Activated T-helper 1 cell treated with anti-CD3 and anti-CD28 coated beads, Interleukin-12 subunit alpha, Interleukin-12 subunit beta, Interleukin-2, Interleukin-4 antibody, amounts not matched to agents 30 ng/mL and 10 ng/mL and 1 ng/mL, durations not matched to agents 14 hours and 24 hours and 36 hours (primary cell): ENCODE measurements at regions of chr9 and their contacts with region 1.

Region 1: DNA sequence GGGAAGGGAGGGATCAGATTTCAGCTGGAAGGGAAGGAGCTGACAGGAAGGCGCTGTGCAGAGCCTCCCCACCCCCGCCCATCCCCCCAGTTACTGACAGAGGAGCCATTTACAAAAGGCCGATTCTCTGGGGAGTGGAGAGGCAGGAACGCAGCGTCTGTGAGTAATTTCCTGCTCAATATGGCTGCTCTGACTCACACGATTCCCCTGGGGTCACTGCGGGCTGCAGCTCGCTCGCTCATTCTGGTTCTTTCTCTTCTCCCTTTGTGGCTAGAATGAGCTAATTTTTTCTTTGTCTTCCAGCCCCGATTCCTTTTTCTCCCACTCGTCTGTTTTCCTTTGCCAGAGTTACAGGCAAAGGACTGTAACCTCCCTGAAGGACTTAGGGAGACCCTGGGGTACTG is 28.8 kb downstream of the PTPA start:
- DNase-seq: peak; percentile 78
- H3K4me3 Mint-ChIP-seq: peak overlapping the region; percentile 82
- H3K27ac Mint-ChIP-seq: peak overlapping the region; percentile 92
- H3K4me1 Mint-ChIP-seq: peaks cover 32% of the 10 kb centered on the region
- H3K27me3 Mint-ChIP-seq: no peaks in the 10 kb centered on the region

Region 2: DNA sequence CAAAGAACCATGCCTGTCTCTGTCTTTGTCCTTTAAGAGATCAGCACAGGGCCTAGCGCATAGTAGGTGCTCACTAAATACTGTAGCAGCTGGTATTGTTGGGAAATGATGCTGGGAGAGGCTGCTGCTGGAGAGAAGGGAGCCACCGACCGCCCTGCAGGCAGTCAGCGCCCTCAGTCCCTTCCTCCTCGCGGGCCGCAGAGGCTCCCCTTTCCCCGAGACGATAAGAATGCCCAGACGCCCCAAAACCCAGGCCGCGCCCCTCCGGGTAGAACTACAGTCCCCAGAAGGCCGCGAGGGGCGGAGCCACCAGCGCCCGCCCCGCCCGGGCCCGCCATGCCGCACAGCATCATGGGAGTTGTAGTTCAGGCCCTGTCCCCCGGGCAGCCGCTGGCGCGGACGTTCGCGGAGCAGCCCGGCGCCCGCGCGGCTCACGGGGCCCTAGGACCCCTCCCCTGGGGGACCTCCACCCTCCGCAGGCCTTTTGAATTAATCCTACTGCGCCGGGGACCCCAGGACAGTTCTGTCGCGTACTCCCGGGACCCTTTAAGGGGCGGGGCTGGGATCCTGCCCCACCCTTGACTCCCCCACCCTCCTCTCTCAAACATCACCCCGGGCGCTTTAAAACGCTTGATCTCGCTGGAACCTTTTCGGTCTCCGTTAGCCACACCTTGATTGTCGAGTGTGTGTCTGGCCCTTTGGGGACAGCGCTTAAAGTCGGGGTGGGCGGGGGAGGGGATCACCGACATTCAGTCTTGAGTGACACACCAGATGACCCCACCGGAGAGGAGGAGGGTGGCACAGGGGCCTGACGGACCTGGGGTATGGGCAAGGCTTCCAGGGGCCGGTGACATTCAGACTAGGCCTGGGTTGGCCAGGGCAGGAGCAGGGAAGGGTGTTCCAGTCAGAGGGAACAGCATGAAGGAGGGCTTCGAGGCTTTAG is 62.9 kb after region 1 on chr9:
- intact Hi-C with region 1: loop called (anchors 1 kb)
- DNase-seq: peak; percentile 90
- H3K4me3 Mint-ChIP-seq: peak overlapping the region; percentile 66
- H3K27ac Mint-ChIP-seq: peak overlapping the region; percentile 73
- H3K4me1 Mint-ChIP-seq: peaks cover 6% of the 10 kb centered on the region
- H3K27me3 Mint-ChIP-seq: peaks cover 8% of the 10 kb centered on the region

Region 3: GRCh38 chr9:129460323-129461261 is 320.6 kb after region 1 on chr9:
- intact Hi-C with region 1: loop called (anchors 2 kb)
- DNase-seq: peak; percentile 83
- H3K4me3 Mint-ChIP-seq: peak overlapping the region; percentile 74
- H3K27ac Mint-ChIP-seq: peak overlapping the region; percentile 91
- H3K4me1 Mint-ChIP-seq: peaks cover 39% of the 10 kb centered on the region
- H3K27me3 Mint-ChIP-seq: peaks cover 1% of the 10 kb centered on the region

Region 4: DNA sequence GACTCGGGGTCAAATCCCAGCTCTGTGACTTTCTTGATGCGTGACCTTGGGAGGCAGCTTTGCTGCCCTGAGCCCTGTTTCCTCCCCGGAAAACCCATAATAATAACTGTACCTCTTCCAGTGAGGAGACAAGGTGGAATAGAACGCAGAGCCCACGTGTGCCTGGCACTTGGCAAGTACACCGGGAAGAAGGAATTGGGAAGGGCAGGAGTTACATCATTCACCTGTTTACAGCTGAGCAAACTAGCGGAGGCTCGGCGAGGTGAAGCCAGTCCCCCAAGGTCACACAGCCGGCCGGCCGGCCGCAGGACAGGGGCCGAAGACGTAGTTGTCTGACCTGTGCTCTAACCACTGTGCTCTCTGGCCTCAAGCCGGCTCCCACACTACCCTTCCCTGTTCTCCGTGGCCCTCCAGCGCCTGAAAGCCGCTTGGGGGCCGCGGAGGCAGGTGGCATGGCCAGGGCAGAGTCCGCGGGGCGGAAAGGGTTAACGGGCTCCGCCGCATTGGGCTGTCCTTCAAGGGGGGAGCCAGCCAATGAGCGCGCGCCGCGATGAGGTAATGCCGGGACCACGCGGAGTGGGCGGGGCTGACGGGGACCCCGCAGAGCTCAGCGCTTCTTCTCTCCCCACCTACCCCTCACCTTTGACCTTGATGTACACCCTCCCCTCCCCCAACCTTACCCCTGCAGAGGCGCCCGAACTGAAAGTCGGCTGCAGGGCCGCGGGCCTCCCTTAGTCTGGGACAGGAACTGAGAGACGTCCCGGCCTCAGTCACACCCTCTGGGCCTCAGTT is 355.7 kb after region 1 on chr9:
- intact Hi-C with region 1: loop called (anchors 1 kb)
- DNase-seq: peak; percentile 82
- H3K4me3 Mint-ChIP-seq: peak overlapping the region; percentile 81
- H3K27ac Mint-ChIP-seq: peak overlapping the region; percentile 77
- H3K4me1 Mint-ChIP-seq: peaks cover 32% of the 10 kb centered on the region
- H3K27me3 Mint-ChIP-seq: no peaks in the 10 kb centered on the region

Region 5: GRCh38 chr9:129626079-129626624 is 486.2 kb after region 1 on chr9 and contains the start of gene NTMT1:
- intact Hi-C with region 1: loop called (anchors 1 kb)
- DNase-seq: peak; percentile 85
- H3K4me3 Mint-ChIP-seq: peak within 1 kb of the TSS; percentile 86
- H3K27ac Mint-ChIP-seq: peak within 1 kb of the TSS; percentile 95
- H3K4me1 Mint-ChIP-seq: peaks cover 41% of the 10 kb centered on the region
- H3K27me3 Mint-ChIP-seq: peaks cover 7% of the 10 kb centered on the region
- total RNA-seq, gene NTMT1: 67.1 and 67.3 TPM in 2 replicates

Region 6: DNA sequence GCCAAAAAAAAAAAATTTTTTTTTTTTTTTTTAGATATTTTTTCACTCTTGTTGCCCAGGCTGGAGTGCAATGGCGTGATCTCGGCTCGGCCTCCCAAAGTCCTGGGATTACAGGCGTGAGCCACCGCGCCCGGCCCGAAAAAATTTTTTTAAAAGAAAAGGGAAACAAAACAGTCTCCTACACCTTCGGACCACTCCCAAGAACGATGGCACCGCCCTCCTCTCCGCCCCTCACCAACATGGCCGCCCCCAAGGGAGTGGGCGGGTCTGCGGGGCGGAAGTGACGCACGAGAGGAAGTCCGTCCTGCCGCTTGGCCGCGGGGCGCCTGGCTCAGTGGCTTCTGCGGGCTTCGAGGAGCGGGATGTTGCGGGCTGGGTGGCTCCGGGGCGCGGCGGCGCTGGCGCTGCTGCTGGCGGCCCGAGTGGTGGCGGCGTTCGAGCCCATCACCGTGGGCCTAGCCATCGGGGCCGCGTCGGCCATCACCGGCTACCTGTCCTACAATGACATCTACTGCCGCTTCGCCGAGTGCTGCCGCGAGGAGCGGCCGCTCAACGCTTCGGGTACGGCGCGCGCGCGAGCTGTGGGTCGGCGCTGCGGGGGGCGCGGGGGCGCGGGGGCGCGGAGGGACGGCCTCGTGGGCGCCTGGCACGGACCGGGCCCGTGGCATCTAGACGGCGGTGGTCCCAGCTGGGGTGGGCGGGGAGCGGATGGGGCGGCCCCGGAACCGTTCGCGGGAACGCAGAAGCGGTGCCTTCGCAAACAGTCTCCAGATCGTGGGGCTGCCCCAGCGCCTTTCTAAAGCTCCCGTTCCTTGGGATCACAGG is 663.1 kb after region 1 on chr9 and contains the start of gene TOR1B:
- intact Hi-C with region 1: loop called (anchors 5 kb)
- DNase-seq: peak; percentile 94
- H3K4me3 Mint-ChIP-seq: peak within 1 kb of the TSS; percentile 90
- H3K27ac Mint-ChIP-seq: peak within 1 kb of the TSS; percentile 90
- H3K4me1 Mint-ChIP-seq: peaks cover 31% of the 10 kb centered on the region
- H3K27me3 Mint-ChIP-seq: no peaks in the 10 kb centered on the region
- total RNA-seq, gene TOR1B: 21.9 and 25.6 TPM in 2 replicates